ENCODE measurements at regions of chr12 and their contacts with region 1.

Region 1: GRCh38 chr12:122730215-122731014 is at the start of gene HCAR1:
- DNase-seq: peak in 4 of 5 donors; percentile 26 to 47 (median 30)
- H3K4me3 ChIP-seq: peak within 1 kb of the TSS; percentile 28
- H3K27ac ChIP-seq: no peak within 1 kb of the TSS
- H3K4me1 ChIP-seq: peaks cover 2% of the 10 kb centered on the region
- H3K27me3 ChIP-seq: no peaks in the 10 kb centered on the region
- CTCF ChIP-seq: no peak
- EP300 ChIP-seq: no peak
- POLR2A ChIP-seq: no peak
- total RNA-seq, gene HCAR1: 0.10 to 2.6 (median 0.53) TPM in 6 of 7 donors, not detected in the other

Region 2: DNA sequence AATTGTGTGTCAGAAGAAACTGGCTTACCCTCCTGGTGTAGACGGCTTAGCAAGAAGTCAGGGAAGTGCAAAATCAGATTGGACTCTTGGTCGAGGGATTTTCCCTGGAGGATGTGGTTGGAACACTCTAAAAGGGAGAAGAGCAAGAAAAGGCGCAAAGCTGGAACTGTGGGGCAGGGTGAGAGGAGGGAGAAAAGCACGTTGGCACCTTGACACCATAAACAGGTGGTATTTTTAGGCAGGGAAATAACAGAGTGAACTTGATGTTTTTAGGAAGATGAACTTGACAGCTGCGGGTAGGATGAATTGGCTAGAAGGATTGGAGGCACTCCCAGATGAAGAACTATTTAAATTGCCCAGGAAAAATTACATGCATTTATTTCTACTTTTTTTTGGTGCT is 94.9 kb before region 1 on chr12:
- intact Hi-C with region 1: loop called in 1 of 4 experiments (anchors 10 kb)
- DNase-seq: no peak
- H3K4me3 ChIP-seq: no peak overlapping the region
- H3K27ac ChIP-seq: no peak overlapping the region
- H3K4me1 ChIP-seq: no peaks in the 10 kb centered on the region
- H3K27me3 ChIP-seq: no peaks in the 10 kb centered on the region
- CTCF ChIP-seq: no peak
- EP300 ChIP-seq: no peak
- POLR2A ChIP-seq: no peak

Region 3: GRCh38 chr12:122659519-122659918 is 70.9 kb before region 1 on chr12:
- intact Hi-C with region 1: loop called in 1 of 4 experiments (anchors 10 kb)
- DNase-seq: no peak
- H3K4me3 ChIP-seq: no peak overlapping the region
- H3K27ac ChIP-seq: no peak overlapping the region
- H3K4me1 ChIP-seq: no peaks in the 10 kb centered on the region
- H3K27me3 ChIP-seq: no peaks in the 10 kb centered on the region
- CTCF ChIP-seq: no peak
- EP300 ChIP-seq: no peak
- POLR2A ChIP-seq: no peak

Measured in ovary (tissue), 10 donors.